PC-9 (cell line): ENCODE measurements at regions of chr21 and their contacts with region 1.

Region 1: DNA sequence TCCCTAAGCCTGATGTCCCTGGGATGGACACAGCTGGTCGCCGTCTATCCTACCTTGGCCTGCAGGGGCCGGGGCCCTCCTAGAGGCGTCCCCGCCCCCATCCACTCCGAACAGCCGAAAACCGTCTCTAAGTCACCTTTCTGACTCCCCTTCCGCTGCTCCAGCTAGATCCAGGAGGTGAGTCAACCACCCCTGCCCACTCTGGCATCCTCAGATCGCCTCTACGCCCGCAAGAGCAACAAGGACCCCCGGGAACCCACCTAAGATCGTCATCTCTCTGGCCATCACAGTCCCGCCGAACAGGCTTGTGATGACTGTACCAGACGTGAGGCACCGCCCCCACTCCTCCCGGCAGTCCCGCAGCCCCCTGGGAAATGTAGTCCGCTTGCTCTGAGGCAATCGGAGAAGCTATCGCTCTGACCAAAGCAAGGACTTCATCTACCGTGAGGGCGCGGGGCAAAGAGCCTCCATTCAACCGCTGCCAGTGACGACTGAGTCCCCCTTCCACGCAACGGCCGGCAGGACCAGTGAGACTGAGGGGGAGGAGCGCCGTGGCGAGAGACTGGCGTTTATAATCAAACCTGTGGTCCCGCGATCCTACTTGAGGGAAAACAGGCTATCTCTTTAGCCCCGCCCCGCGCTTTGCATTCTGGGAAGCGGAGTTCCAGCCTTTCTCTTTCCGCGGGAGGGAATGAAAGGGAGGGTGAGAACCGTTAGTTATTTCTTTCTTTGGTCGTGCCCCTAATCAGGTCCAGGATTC is at the start of gene HSPA13:
- DNase-seq: peak; percentile 96 to 98
- H3K4me3 ChIP-seq: peak within 1 kb of the TSS; percentile 96
- H3K27ac ChIP-seq: peak within 1 kb of the TSS; percentile 75
- H3K4me1 ChIP-seq: peaks cover 31% of the 10 kb centered on the region
- H3K27me3 ChIP-seq: no peaks in the 10 kb centered on the region
- CTCF ChIP-seq: no peak
- total RNA-seq, gene HSPA13: 19.0 and 24.9 TPM in 2 replicates

Region 2: DNA sequence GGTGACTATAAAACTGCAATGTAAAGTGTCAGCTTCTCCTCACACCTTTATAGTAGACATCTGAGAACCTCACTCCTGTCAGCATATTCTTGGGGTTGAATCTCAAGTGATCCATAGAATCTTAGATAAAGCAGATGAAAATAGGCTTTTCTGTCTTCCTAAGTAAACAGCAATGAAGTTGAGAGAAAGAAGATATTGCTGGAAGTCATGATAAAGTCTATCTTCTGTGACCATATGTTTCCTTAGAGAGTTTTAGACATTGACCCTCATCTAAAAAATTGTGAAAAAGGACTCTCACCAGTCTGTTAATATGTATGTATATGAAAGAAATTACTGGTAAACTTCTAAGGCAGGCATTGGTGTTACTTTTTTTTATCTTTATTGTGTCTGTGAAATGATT is 239.0 kb before region 1 on chr21:
- CTCF ChIA-PET with region 1: no interaction called
- POLR2A ChIA-PET with region 1: no interaction called
- intact Hi-C with region 1: no loop called
- DNase-seq: no peak
- H3K4me3 ChIP-seq: no peak overlapping the region
- H3K27ac ChIP-seq: no peak overlapping the region
- H3K4me1 ChIP-seq: no peaks in the 10 kb centered on the region
- H3K27me3 ChIP-seq: no peaks in the 10 kb centered on the region
- CTCF ChIP-seq: no peak

Region 3: DNA sequence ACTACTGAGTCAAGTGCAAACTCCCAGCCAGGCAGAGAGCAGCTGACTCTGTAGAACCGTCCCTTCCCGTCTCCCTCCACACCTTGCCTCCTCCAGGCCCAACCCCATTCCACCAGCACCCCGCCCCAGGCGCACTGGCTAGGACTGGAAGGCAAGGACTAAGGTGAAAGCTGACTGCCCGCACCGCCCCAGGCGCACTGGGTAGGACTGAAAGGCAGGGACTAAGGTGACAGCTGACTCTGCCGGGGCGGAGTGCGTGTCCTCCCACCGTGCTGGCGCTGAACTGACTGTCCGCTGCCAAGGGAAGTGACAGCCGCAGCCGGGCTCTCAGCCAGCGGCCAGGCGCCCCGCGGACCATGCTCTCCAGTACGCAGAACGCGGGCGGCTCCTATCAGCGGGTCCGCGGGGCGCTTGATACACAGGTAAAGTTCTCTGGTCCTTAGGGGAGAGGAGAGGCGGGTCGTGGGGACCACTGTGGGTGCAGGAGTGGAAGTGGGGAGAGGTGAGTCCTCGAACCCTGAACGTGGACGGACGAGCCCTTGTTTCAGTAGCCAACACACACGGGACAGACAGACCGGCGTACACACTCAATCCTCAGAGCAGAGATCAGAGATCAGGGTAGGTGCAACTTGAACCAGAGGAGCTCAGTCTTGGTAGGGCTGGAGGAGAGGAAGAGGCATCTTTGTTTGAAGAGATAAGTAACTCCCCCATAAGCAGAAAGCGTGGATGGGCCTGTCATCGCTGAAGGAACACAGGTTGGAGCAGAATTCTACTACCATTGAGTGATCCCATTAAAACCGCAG is 109.1 kb before region 1 on chr21:
- CTCF ChIA-PET with region 1: no interaction called
- POLR2A ChIA-PET with region 1: no interaction called
- intact Hi-C with region 1: loop called (anchors 10 kb)
- DNase-seq: peak in 1 of 2 experiments; percentile 66
- H3K4me3 ChIP-seq: no peak overlapping the region
- H3K27ac ChIP-seq: no peak overlapping the region
- H3K4me1 ChIP-seq: no peaks in the 10 kb centered on the region
- H3K27me3 ChIP-seq: no peaks in the 10 kb centered on the region
- CTCF ChIP-seq: no peak

Region 4: DNA sequence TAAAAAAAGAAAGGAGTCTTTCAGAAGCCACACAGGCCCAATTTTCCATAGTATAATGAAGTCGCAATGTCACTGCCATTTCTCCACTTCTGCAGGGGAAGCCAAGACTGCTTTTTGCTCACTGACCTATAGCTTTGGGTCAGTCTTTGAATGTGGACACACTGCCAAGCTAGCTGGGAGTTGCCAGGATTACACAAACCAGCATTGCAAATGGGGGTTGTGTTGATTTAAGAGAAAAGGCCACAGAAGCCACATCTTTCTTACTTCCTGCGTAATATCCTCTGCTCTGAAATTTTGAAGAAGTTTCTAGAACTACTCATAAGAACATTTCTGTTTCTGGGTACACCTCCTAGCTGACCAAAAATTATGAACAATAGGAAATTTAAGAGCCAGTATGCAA is 208.9 kb after region 1 on chr21:
- CTCF ChIA-PET with region 1: no interaction called
- POLR2A ChIA-PET with region 1: no interaction called
- intact Hi-C with region 1: no loop called
- DNase-seq: no peak
- H3K4me3 ChIP-seq: no peak overlapping the region
- H3K27ac ChIP-seq: no peak overlapping the region
- H3K4me1 ChIP-seq: no peaks in the 10 kb centered on the region
- H3K27me3 ChIP-seq: no peaks in the 10 kb centered on the region
- CTCF ChIP-seq: no peak

Region 5: GRCh38 chr21:14737922-14738321 is 354.9 kb after region 1 on chr21:
- CTCF ChIA-PET with region 1: interaction called, 15 read pairs
- POLR2A ChIA-PET with region 1: interaction called, 4 read pairs
- intact Hi-C with region 1: no loop called
- DNase-seq: peak; percentile 6 to 37
- H3K4me3 ChIP-seq: no peak overlapping the region
- H3K27ac ChIP-seq: no peak overlapping the region
- H3K4me1 ChIP-seq: peaks cover 7% of the 10 kb centered on the region; the same call in 1 of the 2 replicates
- H3K27me3 ChIP-seq: no peaks in the 10 kb centered on the region
- CTCF ChIP-seq: peak; percentile 63